WTC11 (cell line): ENCODE measurements at regions of chr19 and their contacts with region 1.

Region 1: DNA sequence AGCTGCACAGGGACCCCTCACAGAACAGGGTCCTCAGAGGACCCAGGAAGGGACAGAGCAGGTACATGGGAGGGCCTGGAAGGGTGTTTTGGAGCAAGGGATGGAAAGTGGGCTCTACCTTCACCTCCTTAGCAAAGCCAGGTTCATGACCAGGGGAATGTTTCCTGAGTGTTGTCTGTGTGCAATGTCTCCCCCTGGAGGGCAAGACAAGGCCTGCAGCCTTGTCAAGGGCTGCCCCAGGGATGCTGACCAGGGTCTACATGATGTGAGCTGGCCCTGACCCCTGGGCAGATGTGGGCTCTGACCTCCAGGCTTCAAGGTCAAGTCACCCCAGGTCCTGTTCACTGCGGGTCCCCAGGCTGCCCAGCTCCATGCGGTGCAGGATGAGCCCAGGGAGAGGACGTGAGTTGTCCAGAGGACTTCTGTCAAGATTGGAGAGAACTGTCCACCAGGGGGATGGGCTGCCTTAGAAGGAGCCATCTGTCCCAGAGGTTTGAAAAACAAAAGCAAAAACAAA is 1.0 kb upstream of the CEACAM1 start:
- DNase-seq: peak; percentile 80
- ATAC-seq: peak; percentile 81
- H3K4me3 Mint-ChIP-seq: no peak overlapping the region
- H3K27ac Mint-ChIP-seq: no peak overlapping the region; the same call in 1 of the 2 replicates
- H3K4me1 Mint-ChIP-seq: peaks cover 26% of the 10 kb centered on the region
- H3K27me3 Mint-ChIP-seq: no peaks in the 10 kb centered on the region; the same call in 1 of the 2 replicates
- CTCF ChIP-seq: peak; percentile 88

Region 2: GRCh38 chr19:42450314-42450934 is 78.9 kb before region 1 on chr19:
- CTCF ChIA-PET with region 1: interaction called, 93 read pairs
- POLR2A ChIA-PET with region 1: no interaction called
- DNase-seq: peak; percentile 68
- ATAC-seq: peak; percentile 94
- H3K4me3 Mint-ChIP-seq: no peak overlapping the region
- H3K27ac Mint-ChIP-seq: no peak overlapping the region
- H3K4me1 Mint-ChIP-seq: peaks cover 19% of the 10 kb centered on the region
- H3K27me3 Mint-ChIP-seq: no peaks in the 10 kb centered on the region; the same call in 1 of the 2 replicates
- CTCF ChIP-seq: peak; percentile 82

Region 3: GRCh38 chr19:42455621-42456081 is 73.7 kb before region 1 on chr19:
- CTCF ChIA-PET with region 1: interaction called, 93 read pairs
- POLR2A ChIA-PET with region 1: no interaction called
- DNase-seq: no peak
- ATAC-seq: no peak
- H3K4me3 Mint-ChIP-seq: no peak overlapping the region
- H3K27ac Mint-ChIP-seq: no peak overlapping the region
- H3K4me1 Mint-ChIP-seq: peaks cover 48% of the 10 kb centered on the region
- H3K27me3 Mint-ChIP-seq: no peaks in the 10 kb centered on the region; the same call in 1 of the 2 replicates
- CTCF ChIP-seq: no peak

Region 4: DNA sequence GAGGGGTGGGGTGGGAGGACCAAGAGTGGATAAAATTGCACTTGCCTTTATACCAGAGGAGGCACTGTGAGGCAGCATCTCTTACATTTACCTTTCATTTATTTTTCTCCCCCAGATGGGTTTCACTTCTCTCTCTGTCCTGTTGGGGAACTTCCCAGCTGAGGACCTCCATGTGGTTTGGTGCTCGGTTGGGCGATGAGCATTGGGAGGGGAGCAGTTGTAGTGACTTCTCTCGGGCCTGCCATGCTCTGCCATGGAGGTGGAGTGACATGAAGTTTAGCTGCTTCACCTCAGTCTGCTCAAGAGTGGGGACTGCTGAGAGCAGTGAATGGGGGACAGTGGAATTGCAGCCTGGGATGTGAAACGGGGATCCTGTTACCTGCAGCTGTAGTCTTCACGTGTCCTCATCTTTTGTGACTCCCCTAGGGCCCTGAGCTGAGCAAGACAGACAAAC is 63.5 kb before region 1 on chr19:
- CTCF ChIA-PET with region 1: interaction called, 13 read pairs
- POLR2A ChIA-PET with region 1: no interaction called
- DNase-seq: no peak
- ATAC-seq: peak; percentile 53
- H3K4me3 Mint-ChIP-seq: no peak overlapping the region
- H3K27ac Mint-ChIP-seq: no peak overlapping the region
- H3K4me1 Mint-ChIP-seq: peaks cover 23% of the 10 kb centered on the region
- H3K27me3 Mint-ChIP-seq: peaks cover 4% of the 10 kb centered on the region
- CTCF ChIP-seq: no peak

Region 5: DNA sequence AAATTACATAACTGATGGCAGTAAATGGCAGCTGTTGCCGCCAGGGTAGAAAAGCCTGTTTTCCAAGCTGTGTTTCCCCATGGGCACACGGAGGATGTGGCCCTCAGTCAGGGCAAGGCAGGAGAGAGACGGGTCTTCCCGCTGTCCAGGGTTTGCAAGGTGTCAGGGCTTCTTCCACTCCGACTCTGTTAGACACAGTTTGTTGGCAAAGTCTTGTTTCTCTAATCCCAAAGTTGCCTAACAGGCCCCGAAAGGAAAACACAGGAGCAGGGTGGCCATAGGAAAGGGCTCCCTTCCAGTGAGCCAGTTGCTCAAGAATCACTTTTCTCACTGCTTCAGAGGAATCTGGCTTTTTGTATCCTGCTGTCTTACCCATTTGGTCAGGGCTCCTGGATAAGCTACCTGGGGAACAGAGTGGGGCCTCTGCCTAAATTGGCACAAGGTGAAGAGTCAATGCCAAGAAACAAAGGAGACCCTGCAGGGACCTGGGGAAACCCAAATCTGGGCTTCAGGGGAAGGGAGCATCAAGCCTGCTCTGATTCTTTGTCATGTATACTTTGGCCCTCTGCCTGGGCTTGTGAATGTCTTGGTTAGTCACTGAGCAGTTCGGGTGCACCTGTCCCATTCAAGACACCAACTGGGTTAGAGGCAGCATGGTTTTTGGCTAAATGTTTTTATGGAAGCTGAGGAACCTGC is 57.6 kb before region 1 on chr19:
- CTCF ChIA-PET with region 1: interaction called, 17 read pairs
- POLR2A ChIA-PET with region 1: no interaction called
- DNase-seq: no peak
- ATAC-seq: peak; percentile 20; the same call in 1 of the 2 replicates
- H3K4me3 Mint-ChIP-seq: no peak overlapping the region
- H3K27ac Mint-ChIP-seq: peak overlapping the region; percentile 94
- H3K4me1 Mint-ChIP-seq: peaks cover 66% of the 10 kb centered on the region
- H3K27me3 Mint-ChIP-seq: no peaks in the 10 kb centered on the region
- CTCF ChIP-seq: no peak

Region 6: DNA sequence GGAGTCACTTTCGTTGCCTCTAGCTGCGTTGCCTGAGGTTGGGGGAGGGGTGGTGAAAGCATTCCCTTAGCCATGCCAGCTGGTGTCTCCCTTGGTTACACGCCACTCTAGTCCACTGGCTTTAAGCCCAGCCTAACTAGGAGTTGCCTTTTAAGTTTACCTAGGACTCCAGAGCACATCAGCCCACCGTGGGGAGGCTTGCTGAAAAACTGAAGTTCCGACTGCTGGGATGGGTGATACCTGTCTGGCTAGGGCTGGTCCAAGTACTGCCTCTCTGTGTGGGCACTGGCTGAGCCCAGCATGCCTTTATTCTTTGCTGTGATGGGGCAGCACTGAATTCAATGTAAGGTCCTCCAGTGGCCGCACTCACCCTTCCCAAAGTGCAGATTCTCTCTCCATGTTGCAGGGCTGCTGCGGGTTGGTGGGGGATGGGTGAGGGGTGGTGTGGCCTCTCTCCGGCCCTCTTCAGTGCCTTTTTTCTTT is 10.8 kb after region 1 on chr19:
- CTCF ChIA-PET with region 1: interaction called, 18 read pairs
- POLR2A ChIA-PET with region 1: no interaction called
- DNase-seq: no peak
- ATAC-seq: peak; percentile 38
- H3K4me3 Mint-ChIP-seq: no peak overlapping the region
- H3K27ac Mint-ChIP-seq: no peak overlapping the region
- H3K4me1 Mint-ChIP-seq: peaks cover 28% of the 10 kb centered on the region
- H3K27me3 Mint-ChIP-seq: peaks cover 10% of the 10 kb centered on the region
- CTCF ChIP-seq: no peak